Activated CD4-positive, alpha-beta memory T cell treated with anti-CD3 and anti-CD28 coated beads, Interleukin-2, amount 10 ng/mL, durations not matched to agents 7 days and 5 days (primary cell): ENCODE measurements at regions of chr3 and their contacts with region 1.

Region 1: DNA sequence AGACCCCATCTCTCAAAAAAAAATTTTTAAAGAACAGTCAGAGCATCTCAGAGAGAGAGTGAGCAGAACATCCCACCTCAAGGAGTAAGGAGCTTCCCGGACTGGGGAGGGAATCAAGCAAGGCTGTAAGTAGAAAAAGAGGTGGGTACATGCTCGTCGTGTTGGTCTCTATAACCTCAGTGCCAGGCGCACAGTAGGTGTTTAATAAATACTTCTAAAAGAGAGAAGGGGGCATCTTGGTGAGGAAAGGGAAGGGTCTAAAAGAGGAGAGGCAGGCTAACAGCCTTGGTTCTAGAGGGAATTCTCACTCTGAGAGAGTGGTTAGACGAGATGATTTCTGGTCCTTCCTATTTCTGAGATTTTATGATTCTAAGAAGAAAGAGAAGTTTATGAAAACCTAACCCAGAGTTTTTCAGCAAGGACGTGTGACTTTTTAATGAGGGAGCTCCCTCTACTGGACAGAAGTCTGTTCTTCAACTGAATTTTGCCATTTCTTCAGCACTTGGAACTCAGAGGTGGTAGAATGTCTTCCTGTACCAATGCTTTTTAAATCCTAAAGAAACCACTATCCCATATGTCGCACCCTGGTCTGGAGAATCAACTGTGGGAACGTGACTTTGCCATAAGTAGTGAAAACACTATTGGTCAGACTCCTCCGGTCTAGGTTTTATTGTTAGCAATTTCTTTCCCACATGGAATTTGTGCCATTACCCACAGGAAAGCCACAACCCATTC is 199.7 kb upstream of the LMCD1 start:
- DNase-seq: no peak
- H3K4me3 Mint-ChIP-seq: no peak overlapping the region
- H3K27ac Mint-ChIP-seq: no peak overlapping the region
- H3K4me1 Mint-ChIP-seq: no peaks in the 10 kb centered on the region
- H3K27me3 Mint-ChIP-seq: no peaks in the 10 kb centered on the region

Region 2: DNA sequence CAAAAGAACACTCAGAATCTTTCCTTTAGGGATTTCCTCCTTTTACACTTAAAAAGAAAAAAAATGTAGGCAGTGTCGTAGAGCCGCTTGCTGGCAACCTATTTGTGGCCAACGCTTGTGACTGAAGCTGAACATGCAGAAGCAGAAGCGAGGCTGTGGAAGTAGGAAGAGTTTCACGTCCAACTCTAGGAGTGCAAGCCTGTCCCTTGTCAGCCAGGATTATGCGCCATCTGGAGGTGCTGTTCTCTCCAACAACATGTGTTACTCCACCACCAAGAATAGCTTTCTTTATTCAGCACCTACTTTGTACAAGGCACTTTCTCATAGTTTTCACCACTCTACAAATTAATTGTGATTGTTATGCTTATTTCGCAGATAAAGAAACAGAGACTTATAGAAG is 23.4 kb before region 1 on chr3:
- CTCF ChIA-PET with region 1: no interaction called
- POLR2A ChIA-PET with region 1: no interaction called
- DNase-seq: no peak
- H3K4me3 Mint-ChIP-seq: no peak overlapping the region
- H3K27ac Mint-ChIP-seq: no peak overlapping the region
- H3K4me1 Mint-ChIP-seq: no peaks in the 10 kb centered on the region
- H3K27me3 Mint-ChIP-seq: no peaks in the 10 kb centered on the region

Region 3: GRCh38 chr3:8290611-8291010 is 11.3 kb before region 1 on chr3:
- CTCF ChIA-PET with region 1: interaction called, 10 read pairs
- POLR2A ChIA-PET with region 1: no interaction called
- DNase-seq: no peak
- H3K4me3 Mint-ChIP-seq: no peak overlapping the region
- H3K27ac Mint-ChIP-seq: no peak overlapping the region
- H3K4me1 Mint-ChIP-seq: no peaks in the 10 kb centered on the region
- H3K27me3 Mint-ChIP-seq: peaks cover 5% of the 10 kb centered on the region